B cell (primary cell): ENCODE measurements at regions of chr14 and their contacts with region 1.

Region 1: DNA sequence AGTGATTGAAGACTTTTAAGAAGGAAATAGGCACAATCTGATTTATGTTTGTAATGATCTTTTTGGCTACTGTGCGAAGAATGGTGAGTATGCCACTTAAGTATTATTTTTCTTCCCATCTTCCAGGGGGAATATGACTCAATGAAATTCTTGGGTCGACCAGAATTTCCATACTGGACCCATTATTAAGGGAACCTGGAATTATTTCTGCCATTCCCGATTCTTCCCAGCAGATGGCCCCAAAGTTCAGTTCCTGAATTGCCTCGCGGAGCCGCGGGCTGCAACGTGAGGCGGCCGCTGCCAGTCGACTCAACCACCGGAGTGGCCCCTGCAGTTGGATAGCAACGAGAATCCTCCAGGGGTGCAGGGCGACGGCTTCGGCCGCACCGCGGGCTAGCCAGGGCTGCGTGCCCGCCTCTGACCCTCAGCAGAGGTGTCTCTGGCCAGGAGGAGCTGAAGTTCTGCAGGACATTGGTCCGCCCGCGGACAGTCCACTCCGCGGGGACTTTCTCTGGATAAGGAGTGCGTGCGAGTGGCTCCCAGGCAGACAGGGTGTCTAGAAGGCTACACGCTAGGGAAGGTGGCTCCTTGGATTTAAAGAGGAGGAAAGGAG is 628 bp upstream of the TSHR start:
- DNase-seq: peak; percentile 81
- ATAC-seq: peak; percentile 63
- H3K4me3 ChIP-seq: peak overlapping the region; percentile 36 to 61 (median 53)
- H3K4me3 Mint-ChIP-seq: peak overlapping the region; percentile 88
- H3K27ac ChIP-seq: no peak overlapping the region
- H3K27ac Mint-ChIP-seq: no peak overlapping the region
- H3K4me1 ChIP-seq: peaks cover 25 to 39% of the 10 kb centered on the region in 2 donors
- H3K4me1 Mint-ChIP-seq: peaks cover 52% of the 10 kb centered on the region
- H3K27me3 ChIP-seq: peaks cover 0 to 10% (median 4%) of the 10 kb centered on the region in 4 experiments
- H3K27me3 Mint-ChIP-seq: peaks cover 7% of the 10 kb centered on the region
- CTCF ChIP-seq: peak; percentile 82

Region 2: DNA sequence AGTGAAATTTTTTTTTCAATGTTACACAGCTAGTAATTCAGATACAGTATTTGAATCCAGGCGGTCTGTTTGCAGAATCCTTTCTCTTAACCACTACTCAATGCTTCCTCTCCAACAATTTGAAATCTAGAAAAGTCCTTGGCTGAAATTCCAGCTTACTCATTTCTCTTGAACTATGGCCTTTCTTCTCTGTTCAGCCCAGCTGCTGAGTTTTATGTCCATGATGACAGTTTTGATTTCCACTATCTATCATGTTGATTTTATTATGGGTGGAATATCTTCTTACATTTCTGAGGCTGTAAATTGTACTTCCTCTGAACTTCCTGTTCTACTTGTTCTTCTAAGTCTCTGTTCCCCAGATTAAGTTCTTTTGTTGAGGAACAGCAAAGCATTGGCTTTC is 1058.8 kb before region 1 on chr14:
- CTCF ChIA-PET with region 1: no interaction called
- POLR2A ChIA-PET with region 1: no interaction called
- intact Hi-C with region 1: no loop called
- DNase-seq: no peak
- ATAC-seq: no peak
- H3K4me3 ChIP-seq: no peak overlapping the region
- H3K4me3 Mint-ChIP-seq: no peak overlapping the region
- H3K27ac ChIP-seq: no peak overlapping the region
- H3K27ac Mint-ChIP-seq: no peak overlapping the region
- H3K4me1 ChIP-seq: no peaks in the 10 kb centered on the region
- H3K4me1 Mint-ChIP-seq: no peaks in the 10 kb centered on the region
- H3K27me3 ChIP-seq: no peaks in the 10 kb centered on the region
- H3K27me3 Mint-ChIP-seq: no peaks in the 10 kb centered on the region
- CTCF ChIP-seq: no peak

Region 3: GRCh38 chr14:80987235-80988032 is 32.6 kb after region 1 on chr14:
- CTCF ChIA-PET with region 1: interaction called, 255 read pairs
- POLR2A ChIA-PET with region 1: no interaction called
- intact Hi-C with region 1: loop called (anchors 1 kb)
- DNase-seq: peak; percentile 79
- ATAC-seq: peak; percentile 81
- H3K4me3 ChIP-seq: no peak overlapping the region
- H3K4me3 Mint-ChIP-seq: no peak overlapping the region
- H3K27ac ChIP-seq: no peak overlapping the region
- H3K27ac Mint-ChIP-seq: no peak overlapping the region
- H3K4me1 ChIP-seq: peaks cover 3 to 6% of the 10 kb centered on the region in 2 donors
- H3K4me1 Mint-ChIP-seq: no peaks in the 10 kb centered on the region
- H3K27me3 ChIP-seq: peaks cover 0 to 2% (median 0%) of the 10 kb centered on the region in 4 experiments
- H3K27me3 Mint-ChIP-seq: peaks cover 17% of the 10 kb centered on the region
- CTCF ChIP-seq: peak; percentile 100

Region 4: GRCh38 chr14:81062816-81063215 is 108.0 kb after region 1 on chr14:
- CTCF ChIA-PET with region 1: no interaction called
- POLR2A ChIA-PET with region 1: no interaction called
- intact Hi-C with region 1: loop called (anchors 2 kb)
- DNase-seq: peak; percentile 16
- ATAC-seq: peak; percentile 51
- H3K4me3 ChIP-seq: no peak overlapping the region
- H3K4me3 Mint-ChIP-seq: no peak overlapping the region
- H3K27ac ChIP-seq: no peak overlapping the region
- H3K27ac Mint-ChIP-seq: no peak overlapping the region
- H3K4me1 ChIP-seq: no peaks in the 10 kb centered on the region
- H3K4me1 Mint-ChIP-seq: no peaks in the 10 kb centered on the region
- H3K27me3 ChIP-seq: peaks cover 0 to 10% (median 0%) of the 10 kb centered on the region in 4 experiments
- H3K27me3 Mint-ChIP-seq: peaks cover 3% of the 10 kb centered on the region
- CTCF ChIP-seq: peak; percentile 37

Region 5: DNA sequence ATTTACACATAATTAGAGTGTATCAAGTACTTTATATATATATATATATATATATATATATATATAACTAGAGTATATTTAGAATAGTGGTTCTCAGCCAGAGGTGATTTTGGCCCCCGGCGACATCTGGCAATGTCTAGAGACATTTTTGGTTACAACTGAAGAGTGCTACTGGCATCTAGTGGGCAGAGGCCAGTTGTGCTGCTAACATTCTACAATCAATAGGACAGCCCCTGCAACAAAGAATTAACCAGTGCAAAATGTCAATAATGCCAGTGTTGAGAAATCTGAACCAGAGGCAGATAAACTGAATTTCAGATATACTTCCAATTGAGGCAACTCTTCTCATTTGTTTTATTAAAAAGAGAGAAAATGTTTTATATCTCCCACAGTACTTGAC is 257.1 kb after region 1 on chr14:
- CTCF ChIA-PET with region 1: interaction called, 3 read pairs
- POLR2A ChIA-PET with region 1: interaction called, 4 read pairs
- intact Hi-C with region 1: loop called (anchors 2 kb)
- DNase-seq: peak; percentile 64
- ATAC-seq: peak; percentile 75
- H3K4me3 ChIP-seq: no peak overlapping the region
- H3K4me3 Mint-ChIP-seq: no peak overlapping the region
- H3K27ac ChIP-seq: peak overlapping the region in 1 of 2 donors; percentile 3
- H3K27ac Mint-ChIP-seq: no peak overlapping the region
- H3K4me1 ChIP-seq: peaks cover 17 to 22% of the 10 kb centered on the region in 2 donors
- H3K4me1 Mint-ChIP-seq: peaks cover 52% of the 10 kb centered on the region
- H3K27me3 ChIP-seq: no peaks in the 10 kb centered on the region
- H3K27me3 Mint-ChIP-seq: no peaks in the 10 kb centered on the region
- CTCF ChIP-seq: peak; percentile 75

Region 6: GRCh38 chr14:81464247-81465002 is 509.6 kb after region 1 on chr14:
- CTCF ChIA-PET with region 1: no interaction called
- POLR2A ChIA-PET with region 1: no interaction called
- intact Hi-C with region 1: loop called (anchors 5 kb)
- DNase-seq: peak; percentile 80
- ATAC-seq: peak; percentile 79
- H3K4me3 ChIP-seq: peak overlapping the region; percentile 57 to 73 (median 66)
- H3K4me3 Mint-ChIP-seq: peak overlapping the region; percentile 90
- H3K27ac ChIP-seq: peak overlapping the region; percentile 62 to 75
- H3K27ac Mint-ChIP-seq: peak overlapping the region; percentile 80
- H3K4me1 ChIP-seq: peaks cover 0 to 9% of the 10 kb centered on the region in 2 donors
- H3K4me1 Mint-ChIP-seq: peaks cover 6% of the 10 kb centered on the region
- H3K27me3 ChIP-seq: no peaks in the 10 kb centered on the region
- H3K27me3 Mint-ChIP-seq: no peaks in the 10 kb centered on the region
- CTCF ChIP-seq: peak; percentile 93

Region 7: DNA sequence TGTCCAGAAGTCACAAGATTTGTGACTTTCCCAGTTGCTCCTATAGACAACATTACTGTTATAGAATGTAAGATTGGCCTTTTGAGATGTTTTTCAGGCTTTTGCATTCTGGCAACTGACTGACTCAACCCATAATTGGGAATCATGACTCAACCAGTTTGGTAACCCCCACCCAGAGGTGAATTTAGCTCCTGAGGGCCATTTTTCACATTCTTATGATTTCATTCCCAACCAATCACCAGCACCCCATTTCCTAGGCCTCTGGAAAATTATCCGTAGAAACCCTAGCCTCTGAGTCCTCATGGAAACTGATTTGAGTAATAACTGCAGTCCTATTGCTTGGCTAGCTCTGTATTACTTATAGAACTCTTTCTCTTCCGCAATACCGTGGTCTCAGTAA is 1204.8 kb after region 1 on chr14:
- CTCF ChIA-PET with region 1: no interaction called
- POLR2A ChIA-PET with region 1: no interaction called
- intact Hi-C with region 1: no loop called
- DNase-seq: no peak
- ATAC-seq: no peak
- H3K4me3 ChIP-seq: no peak overlapping the region
- H3K4me3 Mint-ChIP-seq: no peak overlapping the region
- H3K27ac ChIP-seq: no peak overlapping the region
- H3K27ac Mint-ChIP-seq: no peak overlapping the region
- H3K4me1 ChIP-seq: no peaks in the 10 kb centered on the region
- H3K4me1 Mint-ChIP-seq: no peaks in the 10 kb centered on the region
- H3K27me3 ChIP-seq: no peaks in the 10 kb centered on the region
- H3K27me3 Mint-ChIP-seq: no peaks in the 10 kb centered on the region
- CTCF ChIP-seq: no peak